Left colon (tissue), 2 donors: ENCODE measurements at regions of chr11 and their contacts with region 1.

Region 1: GRCh38 chr11:34161812-34162499 is 56.5 kb downstream of the NAT10 start:
- DNase-seq: no peak
- ATAC-seq: peak; percentile 36

Region 2: GRCh38 chr11:34002268-34002807 is 159.6 kb before region 1 on chr11:
- intact Hi-C with region 1: loop called in 1 of 2 experiments (anchors 10 kb)
- DNase-seq: peak; percentile 55 to 77
- ATAC-seq: peak; percentile 99

Region 3: DNA sequence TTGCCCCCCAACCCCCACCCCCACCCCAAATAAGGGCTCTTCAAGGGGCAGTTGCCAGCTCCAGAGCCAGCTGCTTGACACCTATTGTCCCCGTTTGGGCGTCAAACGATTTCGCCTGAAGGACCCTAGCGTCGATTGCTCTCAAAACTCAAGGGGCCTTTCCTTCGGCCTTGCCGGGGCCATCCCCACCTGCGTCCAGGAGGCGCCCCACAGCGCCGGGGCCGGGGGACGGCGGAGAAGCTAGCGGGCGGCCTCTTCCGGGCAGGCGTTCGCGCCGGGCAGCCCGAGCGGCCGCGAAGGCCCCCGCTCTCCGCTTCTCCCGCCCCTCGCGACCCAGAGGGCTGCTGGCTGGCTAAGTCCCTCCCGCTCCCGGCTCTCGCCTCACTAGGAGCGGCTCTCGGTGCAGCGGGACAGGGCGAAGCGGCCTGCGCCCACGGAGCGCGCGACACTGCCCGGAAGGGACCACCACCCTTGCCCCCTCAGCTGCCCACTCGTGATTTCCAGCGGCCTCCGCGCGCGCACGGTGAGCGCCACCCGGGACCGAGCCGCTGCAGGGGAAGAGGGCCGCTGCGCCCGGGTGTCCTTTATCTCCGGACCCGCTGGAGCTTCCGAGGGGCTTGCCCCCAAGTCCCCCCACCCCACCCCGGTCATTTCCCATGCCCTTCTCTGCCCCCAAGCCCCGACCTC is 110.5 kb before region 1 on chr11 and contains the start of gene CAPRIN1:
- intact Hi-C with region 1: no loop called
- DNase-seq: peak; percentile 89 to 91
- ATAC-seq: peak; percentile 84
- total RNA-seq, gene CAPRIN1: 150 to 166 TPM